ENCODE measurements at regions of chr5 and their contacts with region 1.

Region 1: DNA sequence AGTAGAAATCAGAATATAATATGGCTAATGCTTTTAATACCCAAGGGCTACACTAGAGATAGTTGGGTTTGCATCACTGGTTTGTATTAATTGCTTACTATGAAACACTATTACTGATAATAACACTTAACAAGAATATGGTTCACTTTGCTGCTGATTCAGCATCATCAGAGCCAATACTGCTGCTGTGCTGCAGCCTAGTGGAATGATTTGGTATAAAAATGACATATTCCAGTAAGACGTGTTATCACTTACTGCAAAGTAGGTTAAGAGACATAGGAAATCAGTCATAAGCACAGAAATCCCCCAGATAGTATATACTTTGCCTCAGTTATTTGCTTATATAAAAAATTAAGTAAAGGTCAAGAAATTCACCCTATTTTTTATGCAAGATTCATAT is 2.8 kb downstream of the CDH10 start:
- DNase-seq: peak; percentile 34
- H3K4me3 ChIP-seq: no peak overlapping the region
- H3K27ac ChIP-seq: no peak overlapping the region
- H3K4me1 ChIP-seq: no peaks in the 10 kb centered on the region
- CTCF ChIP-seq: peak; percentile 75

Region 2: GRCh38 chr5:23977997-23978396 is 664.0 kb before region 1 on chr5:
- CTCF ChIA-PET with region 1: no interaction called
- POLR2A ChIA-PET with region 1: no interaction called
- intact Hi-C with region 1: loop called (anchors 10 kb)
- DNase-seq: peak; percentile 38
- H3K4me3 ChIP-seq: no peak overlapping the region
- H3K27ac ChIP-seq: no peak overlapping the region
- H3K4me1 ChIP-seq: no peaks in the 10 kb centered on the region
- CTCF ChIP-seq: peak; percentile 76

Region 3: GRCh38 chr5:24232929-24233498 is 409.0 kb before region 1 on chr5:
- CTCF ChIA-PET with region 1: no interaction called
- POLR2A ChIA-PET with region 1: no interaction called
- intact Hi-C with region 1: loop called (anchors 5 kb)
- DNase-seq: peak; percentile 8
- H3K4me3 ChIP-seq: no peak overlapping the region
- H3K27ac ChIP-seq: no peak overlapping the region
- H3K4me1 ChIP-seq: no peaks in the 10 kb centered on the region
- CTCF ChIP-seq: peak; percentile 78